Caco-2 (cell line): ENCODE measurements at regions of chr19 and their contacts with region 1.

Region 1: DNA sequence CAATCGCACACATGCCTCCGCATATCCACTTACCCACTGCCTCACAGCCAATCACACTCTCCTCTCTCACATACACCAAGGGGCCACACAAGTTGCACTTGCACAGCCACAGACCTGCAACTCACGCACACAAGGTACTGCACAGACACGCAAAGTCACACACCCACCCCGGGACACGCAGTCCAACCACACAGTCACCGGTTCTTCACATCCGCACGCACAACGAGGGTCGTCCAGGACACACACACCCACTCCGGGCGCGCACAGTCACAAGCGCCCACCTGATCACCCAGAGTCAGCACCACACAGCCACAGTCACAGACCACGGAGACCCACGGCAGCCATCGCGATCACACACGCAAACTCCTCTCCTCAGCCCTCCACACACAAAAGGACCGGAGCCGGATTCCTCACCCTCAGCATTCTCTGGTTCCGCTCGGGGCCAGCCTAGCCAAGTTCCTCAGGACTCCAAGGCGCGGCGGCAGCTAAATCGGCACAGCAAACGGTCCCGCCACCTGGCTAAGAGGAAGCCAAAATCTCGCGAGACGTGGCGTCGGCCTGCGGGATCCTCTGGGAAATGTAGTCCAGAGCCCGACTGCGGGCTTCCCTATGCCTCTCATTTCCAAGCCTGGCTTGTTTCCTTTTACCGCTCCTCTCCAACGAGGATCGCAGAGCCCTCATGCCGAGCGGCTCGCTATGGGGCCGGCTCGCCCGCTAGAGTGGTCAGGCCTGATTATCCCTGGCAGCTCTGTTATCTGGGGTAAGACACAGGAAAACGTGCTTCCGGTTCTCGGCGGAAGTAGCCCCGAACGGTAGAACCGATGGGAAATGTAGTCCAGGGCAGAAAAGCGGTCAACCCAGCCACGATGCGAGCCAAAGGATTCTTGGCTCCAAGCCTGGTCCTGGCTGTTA is at the start of gene ZNF850:
- DNase-seq: peak; percentile 93 to 96
- H3K4me3 ChIP-seq: peak within 1 kb of the TSS; percentile 66
- H3K4me3 Mint-ChIP-seq: peak within 1 kb of the TSS; percentile 96
- H3K27ac Mint-ChIP-seq: peak within 1 kb of the TSS; percentile 88
- H3K4me1 ChIP-seq: no peaks in the 10 kb centered on the region
- H3K4me1 Mint-ChIP-seq: peaks cover 17% of the 10 kb centered on the region
- H3K27me3 ChIP-seq: no peaks in the 10 kb centered on the region
- H3K27me3 Mint-ChIP-seq: no peaks in the 10 kb centered on the region
- CTCF ChIP-seq: no peak
- total RNA-seq, gene ZNF850: 7.2 and 7.8 TPM in 2 replicates

Region 2: DNA sequence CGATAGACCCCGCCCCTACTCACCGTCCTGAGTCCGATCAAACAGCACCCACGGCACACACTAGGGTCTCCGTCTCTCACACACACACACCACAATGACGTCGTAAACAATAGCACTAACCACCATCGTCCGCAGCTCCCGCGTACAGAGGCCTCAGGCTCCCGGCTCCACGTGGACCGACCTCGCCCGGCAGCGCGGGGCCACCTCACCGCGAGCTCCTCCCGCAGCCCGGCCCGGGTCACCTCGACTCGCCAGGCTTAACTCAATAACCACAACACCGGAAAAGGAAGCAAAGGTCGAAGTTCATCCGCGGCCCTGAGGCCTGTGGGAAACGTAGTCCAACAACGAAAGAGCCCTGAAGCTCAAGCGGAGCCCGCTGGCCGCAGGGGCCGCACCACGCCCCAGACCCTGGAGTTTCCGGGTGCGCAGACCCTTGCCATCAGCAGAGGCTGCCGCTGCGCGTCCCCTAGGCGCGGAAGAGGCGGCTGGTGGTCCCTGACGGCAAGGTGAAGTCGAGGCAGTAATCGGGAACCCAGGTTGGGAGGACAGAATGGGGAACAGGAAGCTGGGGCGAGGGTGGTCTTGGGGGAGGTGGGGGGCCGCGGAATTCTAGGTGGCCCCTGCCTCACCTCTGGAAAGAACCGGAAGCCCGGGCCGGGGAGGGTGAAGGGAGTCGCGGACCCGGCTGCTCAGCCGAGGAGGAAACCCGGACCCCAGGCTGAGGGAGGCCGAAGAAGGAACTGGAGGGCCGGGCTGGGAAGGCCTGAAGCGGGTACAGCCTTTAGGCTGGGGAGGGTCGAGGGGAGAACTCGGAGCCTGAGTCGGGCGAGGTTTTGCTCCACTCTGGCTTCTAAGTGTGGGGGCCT is 199.3 kb before region 1 on chr19 and contains the start of gene ZNF529:
- CTCF ChIA-PET with region 1: no interaction called
- POLR2A ChIA-PET with region 1: interaction called, 3 read pairs
- intact Hi-C with region 1: loop called (anchors 10 kb)
- DNase-seq: peak; percentile 95
- H3K4me3 ChIP-seq: peak within 1 kb of the TSS; percentile 74
- H3K4me3 Mint-ChIP-seq: peak within 1 kb of the TSS; percentile 87
- H3K27ac Mint-ChIP-seq: peak within 1 kb of the TSS; percentile 93
- H3K4me1 ChIP-seq: 0 out of 2 replicates have a peak, but pooled peaks cover 6% of the 10 kb centered on the region
- H3K4me1 Mint-ChIP-seq: peaks cover 25% of the 10 kb centered on the region
- H3K27me3 ChIP-seq: no peaks in the 10 kb centered on the region
- H3K27me3 Mint-ChIP-seq: no peaks in the 10 kb centered on the region
- CTCF ChIP-seq: peak in 1 of 2 experiments; percentile 7
- total RNA-seq, gene ZNF529: 5.6 and 10.5 TPM in 2 replicates

Region 3: GRCh38 chr19:36665832-36666231 is 106.7 kb before region 1 on chr19:
- CTCF ChIA-PET with region 1: no interaction called
- POLR2A ChIA-PET with region 1: no interaction called
- intact Hi-C with region 1: loop called (anchors 5 kb)
- DNase-seq: no peak
- H3K4me3 ChIP-seq: peak overlapping the region; percentile 50
- H3K4me3 Mint-ChIP-seq: peak overlapping the region; percentile 98
- H3K27ac Mint-ChIP-seq: peak overlapping the region; percentile 91
- H3K4me1 ChIP-seq: no peaks in the 10 kb centered on the region
- H3K4me1 Mint-ChIP-seq: peaks cover 7% of the 10 kb centered on the region
- H3K27me3 ChIP-seq: no peaks in the 10 kb centered on the region
- H3K27me3 Mint-ChIP-seq: no peaks in the 10 kb centered on the region
- CTCF ChIP-seq: no peak

Region 4: GRCh38 chr19:36687214-36688056 is 85.1 kb before region 1 on chr19 and contains the start of gene ZNF567:
- CTCF ChIA-PET with region 1: no interaction called
- POLR2A ChIA-PET with region 1: no interaction called
- intact Hi-C with region 1: loop called (anchors 5 kb)
- DNase-seq: peak; percentile 98 to 99
- H3K4me3 ChIP-seq: peak within 1 kb of the TSS; percentile 93
- H3K4me3 Mint-ChIP-seq: peak within 1 kb of the TSS; percentile 94
- H3K27ac Mint-ChIP-seq: peak within 1 kb of the TSS; percentile 99
- H3K4me1 ChIP-seq: no peaks in the 10 kb centered on the region
- H3K4me1 Mint-ChIP-seq: peaks cover 8% of the 10 kb centered on the region
- H3K27me3 ChIP-seq: no peaks in the 10 kb centered on the region
- H3K27me3 Mint-ChIP-seq: no peaks in the 10 kb centered on the region
- CTCF ChIP-seq: peak in 1 of 2 experiments; percentile 23
- total RNA-seq, gene ZNF567: 8.6 and 9.0 TPM in 2 replicates